ENCODE measurements at regions of chr14 and their contacts with region 1.

Region 1: GRCh38 chr14:101518610-101519473 is 42.5 kb upstream of the DIO3 start:
- DNase-seq: no peak
- H3K4me3 ChIP-seq: no peak overlapping the region
- H3K27ac ChIP-seq: no peak overlapping the region
- H3K4me1 ChIP-seq: no peaks in the 10 kb centered on the region
- H3K27me3 ChIP-seq: no peaks in the 10 kb centered on the region
- CTCF ChIP-seq: no peak

Region 2: GRCh38 chr14:101480747-101481530 is 37.9 kb before region 1 on chr14:
- CTCF ChIA-PET with region 1: no interaction called
- dilution Hi-C with region 1: no loop called
- in situ Hi-C with region 1: no loop called
- intact Hi-C with region 1: no loop called
- DNase-seq: peak; percentile 68
- H3K4me3 ChIP-seq: no peak overlapping the region
- H3K27ac ChIP-seq: no peak overlapping the region
- H3K4me1 ChIP-seq: peaks cover 12% of the 10 kb centered on the region
- H3K27me3 ChIP-seq: no peaks in the 10 kb centered on the region
- CTCF ChIP-seq: no peak

Region 3: GRCh38 chr14:101559624-101560533 is 41.0 kb after region 1 on chr14:
- CTCF ChIA-PET with region 1: no interaction called
- dilution Hi-C with region 1: loop called (anchors 5 kb)
- in situ Hi-C with region 1: no loop called
- intact Hi-C with region 1: no loop called
- DNase-seq: no peak
- H3K4me3 ChIP-seq: no peak overlapping the region
- H3K27ac ChIP-seq: no peak overlapping the region
- H3K4me1 ChIP-seq: no peaks in the 10 kb centered on the region
- H3K27me3 ChIP-seq: peaks cover 41% of the 10 kb centered on the region
- CTCF ChIP-seq: no peak

Region 4: GRCh38 chr14:101635749-101636560 is 117.1 kb after region 1 on chr14:
- CTCF ChIA-PET with region 1: no interaction called
- dilution Hi-C with region 1: no loop called
- in situ Hi-C with region 1: no loop called
- intact Hi-C with region 1: no loop called
- DNase-seq: no peak
- H3K4me3 ChIP-seq: no peak overlapping the region
- H3K27ac ChIP-seq: no peak overlapping the region
- H3K4me1 ChIP-seq: no peaks in the 10 kb centered on the region
- H3K27me3 ChIP-seq: no peaks in the 10 kb centered on the region
- CTCF ChIP-seq: no peak

Measured in mammary epithelial cell (primary cell).